ENCODE measurements at regions of chr18 and their contacts with region 1.

Region 1: DNA sequence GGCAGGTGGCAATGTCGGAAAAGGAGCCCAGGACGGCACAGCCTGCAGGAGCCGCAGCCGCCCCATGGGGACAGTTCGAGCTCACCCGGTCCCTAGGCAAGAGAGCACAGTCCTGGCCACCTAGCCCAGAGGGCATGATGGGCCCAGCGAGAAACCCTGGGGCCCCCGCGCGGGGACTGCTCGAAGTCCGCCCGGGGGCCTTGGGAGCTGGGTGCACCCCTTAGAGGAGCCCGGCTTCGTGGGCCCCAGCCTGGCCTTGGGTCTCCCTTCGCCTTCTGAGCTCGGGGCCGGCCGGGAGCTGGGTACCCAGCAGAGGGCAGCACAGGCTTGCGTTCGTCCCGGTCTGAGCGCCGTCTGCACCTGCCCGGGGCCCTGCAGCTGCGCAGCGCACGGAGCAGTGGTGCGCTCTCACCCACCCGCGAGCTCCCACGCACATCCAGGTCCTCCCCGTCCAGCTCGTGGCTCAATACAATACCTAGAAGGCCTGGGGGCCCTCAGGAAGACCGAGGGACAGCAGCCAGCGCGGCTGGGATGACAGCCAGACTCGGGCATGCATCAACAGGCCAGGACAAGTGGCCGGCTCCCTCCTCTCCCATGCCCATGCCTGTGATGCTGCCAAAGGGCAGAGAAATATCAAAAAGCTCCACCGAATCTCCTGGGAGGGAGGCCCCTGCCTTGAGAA is 96.2 kb upstream of the ZNF532 start:
- DNase-seq: peak; percentile 75
- H3K4me3 ChIP-seq: no peak overlapping the region
- H3K27ac ChIP-seq: peak overlapping the region; percentile 66 to 67
- H3K4me1 ChIP-seq: peaks cover 5% of the 10 kb centered on the region
- H3K27me3 ChIP-seq: no peaks in the 10 kb centered on the region
- CTCF ChIP-seq: peak; percentile 74 to 94 (median 84)
- POLR2A ChIP-seq: no peak

Region 2: DNA sequence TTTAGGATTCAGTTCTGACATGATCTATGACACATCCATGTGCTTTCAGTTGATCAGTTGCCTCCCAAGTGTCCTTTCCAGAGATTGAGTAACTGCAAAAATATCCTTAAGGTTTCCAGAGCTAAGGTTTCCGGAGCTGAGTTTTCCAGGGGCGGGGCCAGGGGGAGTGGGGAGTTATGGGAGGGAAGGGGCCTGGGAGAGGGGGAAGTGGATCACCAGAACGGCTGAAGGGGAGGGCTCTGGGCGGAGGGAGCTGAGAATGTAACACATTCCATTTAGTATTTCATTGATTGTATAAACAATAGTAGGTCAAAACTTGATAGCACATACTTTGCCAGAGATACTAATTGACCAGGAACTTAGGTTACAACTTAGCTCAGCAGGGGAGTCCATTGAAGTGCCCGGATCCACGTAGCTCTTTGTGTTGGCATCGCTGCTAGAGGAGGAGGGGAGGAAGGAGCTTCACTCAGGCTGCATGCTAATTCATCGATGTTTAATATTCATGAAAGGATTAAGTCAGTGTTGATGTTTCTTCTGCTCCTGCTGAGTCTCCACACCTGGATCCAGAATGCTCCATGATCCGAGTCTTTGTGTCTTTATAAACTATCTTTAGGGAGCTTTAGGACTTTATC is 429.4 kb before region 1 on chr18:
- intact Hi-C with region 1: loop called (anchors 10 kb)
- DNase-seq: no peak
- H3K4me3 ChIP-seq: no peak overlapping the region
- H3K27ac ChIP-seq: peak overlapping the region; percentile 18 to 38
- H3K4me1 ChIP-seq: peaks cover 2% of the 10 kb centered on the region
- H3K27me3 ChIP-seq: no peaks in the 10 kb centered on the region
- CTCF ChIP-seq: no peak
- POLR2A ChIP-seq: no peak

Region 3: GRCh38 chr18:59061914-59062642 is 293.6 kb after region 1 on chr18:
- intact Hi-C with region 1: loop called (anchors 2 kb)
- DNase-seq: no peak
- H3K4me3 ChIP-seq: no peak overlapping the region
- H3K27ac ChIP-seq: peak overlapping the region; percentile 83 to 95
- H3K4me1 ChIP-seq: no peaks in the 10 kb centered on the region
- H3K27me3 ChIP-seq: no peaks in the 10 kb centered on the region
- CTCF ChIP-seq: no peak
- POLR2A ChIP-seq: no peak

Region 4: DNA sequence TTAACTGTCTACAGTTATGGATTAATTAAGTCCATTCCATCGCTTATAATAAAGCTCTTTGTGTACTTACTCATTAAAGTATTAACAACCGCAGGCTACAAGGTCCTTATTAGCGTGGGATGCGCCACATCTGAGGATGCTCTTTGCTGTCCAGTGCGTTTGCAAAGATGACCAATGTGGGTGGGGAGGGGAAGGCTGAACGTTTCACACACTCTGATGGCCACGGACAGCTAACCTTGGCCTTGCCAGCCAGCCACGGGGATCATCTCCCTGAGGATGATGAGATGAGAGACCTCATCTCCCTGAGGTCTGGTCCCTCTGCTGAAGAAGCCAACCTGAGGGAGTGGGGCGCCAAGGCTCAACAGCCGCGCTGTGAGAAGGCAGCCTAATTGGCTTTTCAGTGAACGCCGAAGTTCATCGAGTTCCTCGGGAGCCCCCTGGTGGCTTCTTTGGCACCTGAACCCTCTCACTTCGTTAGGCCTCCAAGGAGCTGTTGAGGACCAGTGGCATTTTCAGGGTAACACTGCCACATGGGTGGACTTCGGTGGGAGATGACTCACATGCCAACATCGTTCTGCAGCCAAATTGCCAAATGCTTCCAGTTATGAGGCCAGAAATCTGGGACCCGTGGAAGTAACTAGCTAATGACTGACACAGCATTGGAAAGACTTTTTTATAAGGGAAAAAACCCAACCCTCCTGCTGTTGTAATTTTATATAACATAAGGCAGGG is 301.9 kb after region 1 on chr18:
- intact Hi-C with region 1: loop called (anchors 1 kb)
- DNase-seq: peak; percentile 88
- H3K4me3 ChIP-seq: no peak overlapping the region
- H3K27ac ChIP-seq: peak overlapping the region; percentile 83 to 95
- H3K4me1 ChIP-seq: no peaks in the 10 kb centered on the region
- H3K27me3 ChIP-seq: no peaks in the 10 kb centered on the region
- CTCF ChIP-seq: peak; percentile 76 to 94 (median 91)
- POLR2A ChIP-seq: no peak